Dendritic cell treated with granulocyte-macrophage colony-stimulating factor and Interleukin-4, amounts not matched to agents 40 ng/mL and 50 ng/mL, for 4 days (primary cell): ENCODE measurements at regions of chr9 and their contacts with region 1.

Region 1: DNA sequence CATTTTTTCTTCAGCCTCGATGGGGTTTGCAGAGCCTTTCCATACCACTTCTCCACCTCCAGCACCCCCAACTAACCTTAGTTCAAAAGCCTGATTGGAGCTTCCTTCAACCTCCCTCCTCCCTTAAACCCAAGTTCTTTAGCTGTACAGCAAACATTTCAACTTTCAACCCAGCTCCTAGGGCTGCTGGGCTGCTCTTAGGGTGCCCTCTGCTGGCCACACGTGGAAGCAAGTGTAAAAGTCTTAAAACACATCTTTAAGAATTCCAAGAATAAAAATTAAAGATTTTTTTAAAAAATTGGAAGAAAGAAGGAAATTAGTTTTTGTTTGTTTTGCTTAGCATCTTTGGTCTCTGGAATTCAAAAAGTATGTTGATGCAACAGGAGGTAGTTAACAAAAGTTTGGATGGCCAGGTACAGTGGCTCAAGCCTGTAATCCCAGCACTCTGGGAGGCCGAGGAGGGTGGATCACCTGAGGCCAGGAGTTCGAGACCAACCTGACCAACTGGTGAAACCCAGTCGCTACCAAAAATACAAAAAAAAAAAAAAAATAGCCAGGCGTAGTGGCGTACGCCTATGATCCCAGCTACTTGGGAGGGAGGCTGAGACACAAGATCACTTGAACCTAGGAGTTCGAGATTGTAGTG is 15.5 kb upstream of the HSD17B3 start:
- H3K4me3 Mint-ChIP-seq: no peak overlapping the region
- H3K27ac Mint-ChIP-seq: no peak overlapping the region
- H3K4me1 Mint-ChIP-seq: peaks cover 17% of the 10 kb centered on the region
- H3K27me3 Mint-ChIP-seq: no peaks in the 10 kb centered on the region

Region 2: GRCh38 chr9:96232539-96233241 is 84.8 kb before region 1 on chr9:
- intact Hi-C with region 1: loop called (anchors 5 kb)
- H3K4me3 Mint-ChIP-seq: no peak overlapping the region
- H3K27ac Mint-ChIP-seq: no peak overlapping the region
- H3K4me1 Mint-ChIP-seq: no peaks in the 10 kb centered on the region
- H3K27me3 Mint-ChIP-seq: peaks cover 21% of the 10 kb centered on the region